ENCODE measurements at regions of chr2 and their contacts with region 1.

Region 1: DNA sequence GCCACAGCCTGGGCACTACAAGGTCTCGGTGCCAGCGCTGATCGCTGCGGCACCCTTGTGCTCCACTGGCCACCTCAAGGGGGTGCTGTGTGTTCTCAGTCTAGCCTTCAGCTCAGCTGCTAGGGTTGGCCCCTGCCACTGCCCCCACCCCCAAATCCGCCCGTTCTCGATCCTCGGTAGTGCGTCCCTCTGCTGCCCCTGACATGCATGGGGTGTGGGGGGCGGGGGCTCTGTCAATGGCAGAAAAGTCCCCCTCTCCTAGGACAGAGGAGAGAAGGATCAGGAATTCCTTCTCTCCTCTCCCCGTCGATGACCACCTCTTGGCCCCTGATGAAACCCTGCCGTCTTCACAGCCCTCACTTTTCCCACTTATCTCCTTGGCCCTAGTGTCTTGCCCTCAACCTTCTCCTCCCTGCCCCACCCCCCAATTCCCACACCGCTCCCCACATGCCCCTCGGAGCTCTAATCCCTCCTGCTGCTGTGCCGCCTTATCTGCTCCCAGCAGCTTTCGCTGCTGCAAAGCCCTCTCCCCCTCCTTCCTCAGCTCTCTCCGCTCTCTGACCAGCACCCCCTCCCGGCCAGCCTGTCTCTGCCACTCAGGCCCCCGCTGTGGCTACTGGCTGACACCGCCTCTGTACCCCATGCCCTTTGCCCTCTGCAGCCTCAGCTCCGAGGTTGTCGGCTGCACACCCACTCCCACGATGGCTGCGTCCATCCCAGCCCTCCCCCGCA is 4.3 kb upstream of the ASIC4 start:
- DNase-seq: peak; percentile 83 to 95 (median 88)
- ATAC-seq: peak; percentile 71
- H3K4me3 ChIP-seq: no peak overlapping the region
- H3K27ac ChIP-seq: peak overlapping the region; percentile 89
- H3K4me1 ChIP-seq: peaks cover 68 to 98% of the 10 kb centered on the region in 2 experiments
- H3K27me3 ChIP-seq: no peaks in the 10 kb centered on the region
- CTCF ChIP-seq: peak; percentile 65 to 73 (median 66)
- EP300 ChIP-seq: peak; percentile 95
- POLR2A ChIP-seq: peak; percentile 17; the same call in 1 of the 2 replicates
- RAD21 ChIP-seq: peak; percentile 49 to 61

Region 2: DNA sequence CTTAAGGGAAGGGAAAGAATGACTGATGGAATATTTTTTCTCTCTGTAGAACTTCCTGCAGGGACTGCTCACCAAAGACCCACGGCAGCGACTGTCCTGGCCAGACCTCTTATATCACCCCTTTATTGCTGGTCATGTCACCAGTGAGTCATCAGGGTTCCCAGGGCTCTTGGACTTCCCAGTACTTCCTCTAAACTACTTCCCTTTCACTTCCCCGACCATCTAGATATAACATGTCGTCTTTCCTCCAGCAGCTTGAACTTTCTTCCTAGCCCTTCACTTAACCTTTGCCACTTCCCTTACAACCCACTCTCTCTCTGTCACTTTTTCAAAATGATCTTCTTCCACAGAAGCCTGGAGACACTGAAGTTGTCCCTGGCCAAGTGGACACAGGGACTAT is 830.8 kb before region 1 on chr2:
- CTCF ChIA-PET with region 1: no interaction called
- POLR2A ChIA-PET with region 1: no interaction called
- in situ Hi-C with region 1: no loop called
- intact Hi-C with region 1: no loop called
- DNase-seq: peak; percentile 24 to 61 (median 38)
- ATAC-seq: peak; percentile 77
- H3K4me3 ChIP-seq: no peak overlapping the region
- H3K27ac ChIP-seq: peak overlapping the region; percentile 32; the same call in 2 of the 3 replicates
- H3K4me1 ChIP-seq: peaks cover 6 to 12% of the 10 kb centered on the region in 2 experiments; a peak in 3 of 5 replicates
- H3K27me3 ChIP-seq: no peaks in the 10 kb centered on the region
- CTCF ChIP-seq: no peak
- EP300 ChIP-seq: no peak
- POLR2A ChIP-seq: no peak
- RAD21 ChIP-seq: no peak

Region 3: DNA sequence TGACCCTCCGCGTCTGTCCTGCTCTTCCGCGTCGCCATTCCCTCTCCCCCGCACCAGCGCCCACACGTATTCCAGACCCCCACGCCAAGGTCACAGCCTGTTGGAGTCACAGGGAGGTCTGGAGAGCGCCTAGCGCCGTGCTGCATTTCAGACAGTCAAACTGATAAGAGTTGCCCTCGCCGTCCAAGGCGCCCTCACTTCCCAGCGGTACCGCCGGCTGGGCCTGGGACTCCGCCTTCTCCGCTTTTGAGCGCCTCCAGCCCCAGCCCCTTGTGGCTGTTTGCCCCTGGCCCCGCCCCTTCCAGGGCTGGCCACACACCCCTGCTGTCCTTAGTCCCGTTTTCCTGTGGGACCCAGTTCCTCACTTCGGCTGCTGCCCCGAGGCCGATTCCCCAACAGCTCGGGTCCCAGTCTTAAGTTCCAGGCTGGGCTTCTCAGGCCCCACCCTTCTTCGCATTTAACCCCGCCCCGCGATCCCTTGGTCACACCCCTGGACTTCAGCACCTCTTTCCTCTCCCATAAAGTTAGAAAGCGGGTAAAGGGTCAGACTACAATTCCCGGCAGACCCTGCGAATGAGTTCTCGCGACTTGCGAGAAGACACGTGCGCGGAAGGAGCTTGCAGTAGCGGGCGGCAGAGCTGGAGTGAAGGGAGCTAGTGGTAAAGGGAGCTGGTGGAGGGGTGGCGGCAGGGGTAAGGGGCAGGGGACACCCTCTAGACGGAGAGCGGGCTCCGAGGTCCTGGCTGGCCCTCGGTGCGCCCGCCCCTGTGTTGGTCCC is 11.5 kb before region 1 on chr2 and contains the start of gene GMPPA:
- CTCF ChIA-PET with region 1: interaction called, 3 read pairs
- POLR2A ChIA-PET with region 1: interaction called, 37 read pairs
- in situ Hi-C with region 1: no loop called
- intact Hi-C with region 1: loop called (anchors 1 kb)
- DNase-seq: peak; percentile 74 to 95 (median 85)
- ATAC-seq: peak; percentile 85
- H3K4me3 ChIP-seq: peak within 1 kb of the TSS; percentile 64
- H3K27ac ChIP-seq: peak within 1 kb of the TSS; percentile 95
- H3K4me1 ChIP-seq: peaks cover 47 to 60% of the 10 kb centered on the region in 2 experiments
- H3K27me3 ChIP-seq: no peaks in the 10 kb centered on the region
- CTCF ChIP-seq: no peak
- EP300 ChIP-seq: no peak; the same call in 1 of the 2 replicates
- POLR2A ChIP-seq: peak; percentile 80
- RAD21 ChIP-seq: no peak; a peak in 1 of 4 replicates
- polyA plus RNA-seq, gene GMPPA: 7.0 to 24.7 TPM

Region 4: GRCh38 chr2:219521066-219521880 is 11.3 kb after region 1 on chr2:
- CTCF ChIA-PET with region 1: no interaction called
- POLR2A ChIA-PET with region 1: interaction called, 7 read pairs
- in situ Hi-C with region 1: no loop called
- intact Hi-C with region 1: loop called (anchors 1 kb)
- DNase-seq: peak; percentile 70 to 93 (median 84)
- ATAC-seq: peak; percentile 74
- H3K4me3 ChIP-seq: no peak overlapping the region; the same call in 1 of the 2 replicates
- H3K27ac ChIP-seq: peak overlapping the region; percentile 89
- H3K4me1 ChIP-seq: peaks cover 73 to 88% of the 10 kb centered on the region in 2 experiments
- H3K27me3 ChIP-seq: no peaks in the 10 kb centered on the region
- CTCF ChIP-seq: peak; percentile 76 to 88 (median 79)
- EP300 ChIP-seq: peak; percentile 87
- POLR2A ChIP-seq: no peak; the same call in 1 of the 2 replicates
- RAD21 ChIP-seq: peak; percentile 67 to 73